ENCODE measurements at regions of chr5 and their contacts with region 1.

Region 1: DNA sequence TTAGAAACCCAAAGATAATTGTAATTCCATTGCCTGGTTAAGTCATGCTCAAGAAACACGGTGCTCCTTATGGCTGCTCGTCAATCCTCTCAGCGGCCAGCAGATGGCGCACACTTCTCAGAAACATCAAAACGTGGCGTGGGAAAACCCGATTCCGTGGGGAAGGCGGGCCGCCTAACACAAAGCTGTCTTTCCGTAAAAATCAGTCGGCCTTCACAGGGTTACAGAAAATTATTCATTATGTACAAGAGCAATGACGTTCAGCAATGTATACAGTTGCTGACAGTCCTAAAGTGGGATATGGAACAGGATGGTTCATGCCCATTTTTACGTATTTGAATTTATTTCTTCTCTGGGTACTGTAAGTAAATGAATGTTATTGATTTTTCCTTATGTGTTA is 83.5 kb downstream of the PDE4D start:
- DNase-seq: peak; percentile 77
- H3K4me3 ChIP-seq: no peak overlapping the region
- H3K27ac ChIP-seq: no peak overlapping the region
- H3K4me1 ChIP-seq: no peaks in the 10 kb centered on the region
- H3K27me3 ChIP-seq: peaks cover 44% of the 10 kb centered on the region
- CTCF ChIP-seq: peak; percentile 93

Region 2: GRCh38 chr5:59724482-59725391 is 85.3 kb before region 1 on chr5:
- CTCF ChIA-PET with region 1: no interaction called
- POLR2A ChIA-PET with region 1: no interaction called
- intact Hi-C with region 1: no loop called
- DNase-seq: peak; percentile 69
- H3K4me3 ChIP-seq: no peak overlapping the region
- H3K27ac ChIP-seq: no peak overlapping the region
- H3K4me1 ChIP-seq: no peaks in the 10 kb centered on the region
- H3K27me3 ChIP-seq: peaks cover 8% of the 10 kb centered on the region
- CTCF ChIP-seq: peak; percentile 78

Region 3: DNA sequence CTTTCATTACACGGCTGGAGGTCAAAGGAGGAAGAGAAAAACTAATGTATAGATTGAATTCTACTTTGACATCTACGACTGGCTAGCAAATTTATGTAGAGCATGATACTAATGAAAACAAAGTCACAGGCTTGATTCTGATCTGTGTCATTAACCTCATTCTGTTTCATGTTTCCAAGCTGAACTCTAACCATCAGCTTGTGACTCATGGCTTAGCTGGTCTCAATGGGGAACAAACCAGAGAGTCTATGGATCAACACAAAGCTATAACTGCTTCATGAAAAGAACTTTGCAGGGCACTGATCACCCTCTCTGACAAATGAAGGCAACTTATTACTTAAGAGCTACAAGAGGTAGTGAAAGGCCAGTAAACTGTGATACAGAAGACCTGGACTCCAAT is 107.1 kb after region 1 on chr5:
- CTCF ChIA-PET with region 1: no interaction called
- POLR2A ChIA-PET with region 1: no interaction called
- intact Hi-C with region 1: no loop called
- DNase-seq: no peak
- H3K4me3 ChIP-seq: no peak overlapping the region
- H3K27ac ChIP-seq: no peak overlapping the region
- H3K4me1 ChIP-seq: no peaks in the 10 kb centered on the region
- H3K27me3 ChIP-seq: peaks cover 15% of the 10 kb centered on the region
- CTCF ChIP-seq: no peak

Region 4: GRCh38 chr5:60161340-60161934 is 351.4 kb after region 1 on chr5:
- CTCF ChIA-PET with region 1: no interaction called
- POLR2A ChIA-PET with region 1: no interaction called
- intact Hi-C with region 1: loop called (anchors 2 kb)
- DNase-seq: peak; percentile 59
- H3K4me3 ChIP-seq: no peak overlapping the region
- H3K27ac ChIP-seq: no peak overlapping the region
- H3K4me1 ChIP-seq: no peaks in the 10 kb centered on the region
- H3K27me3 ChIP-seq: peaks cover 28% of the 10 kb centered on the region
- CTCF ChIP-seq: peak; percentile 69

Region 5: DNA sequence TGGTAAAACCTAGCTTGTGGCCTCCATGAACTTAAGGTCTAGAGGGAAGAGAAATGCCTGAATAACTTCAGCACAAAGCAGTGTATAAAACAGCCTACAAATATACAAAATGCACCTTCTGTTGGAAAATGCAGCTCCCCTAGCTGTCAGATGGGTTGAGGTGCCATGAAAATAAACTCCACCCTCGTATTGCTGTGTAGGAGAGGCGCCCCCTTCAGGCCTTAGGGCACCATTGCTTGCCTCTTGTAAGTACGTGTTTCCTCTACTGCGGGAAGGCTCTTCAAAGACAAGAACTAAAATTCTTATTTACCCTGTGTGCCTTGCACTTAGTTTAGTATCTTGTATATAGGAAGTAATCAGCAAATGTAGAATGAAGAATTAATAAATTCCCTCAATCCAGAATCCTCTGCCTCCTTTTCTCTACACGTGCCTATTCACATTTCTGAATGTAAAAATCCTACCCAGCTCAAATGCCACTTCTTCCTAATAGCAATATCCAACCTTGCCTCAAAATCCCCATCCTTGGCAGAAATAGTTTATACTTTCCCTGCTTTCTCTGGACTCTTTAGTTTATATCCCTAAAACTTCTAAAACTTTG is 477.2 kb after region 1 on chr5:
- CTCF ChIA-PET with region 1: interaction called, 15 read pairs
- POLR2A ChIA-PET with region 1: no interaction called
- intact Hi-C with region 1: loop called (anchors 1 kb)
- DNase-seq: peak; percentile 91
- H3K4me3 ChIP-seq: no peak overlapping the region
- H3K27ac ChIP-seq: no peak overlapping the region
- H3K4me1 ChIP-seq: no peaks in the 10 kb centered on the region
- H3K27me3 ChIP-seq: peaks cover 58% of the 10 kb centered on the region
- CTCF ChIP-seq: peak; percentile 96

Region 6: GRCh38 chr5:60382716-60383115 is 572.7 kb after region 1 on chr5:
- CTCF ChIA-PET with region 1: no interaction called
- POLR2A ChIA-PET with region 1: no interaction called
- intact Hi-C with region 1: loop called (anchors 1 kb)
- DNase-seq: peak; percentile 45
- H3K4me3 ChIP-seq: no peak overlapping the region
- H3K27ac ChIP-seq: no peak overlapping the region
- H3K4me1 ChIP-seq: no peaks in the 10 kb centered on the region
- H3K27me3 ChIP-seq: peaks cover 67% of the 10 kb centered on the region
- CTCF ChIP-seq: peak; percentile 55

Region 7: GRCh38 chr5:60649283-60649917 is 839.4 kb after region 1 on chr5:
- CTCF ChIA-PET with region 1: no interaction called
- POLR2A ChIA-PET with region 1: no interaction called
- intact Hi-C with region 1: loop called (anchors 5 kb)
- DNase-seq: peak; percentile 48
- H3K4me3 ChIP-seq: no peak overlapping the region
- H3K27ac ChIP-seq: no peak overlapping the region
- H3K4me1 ChIP-seq: no peaks in the 10 kb centered on the region
- H3K27me3 ChIP-seq: no peaks in the 10 kb centered on the region
- CTCF ChIP-seq: peak; percentile 73

Region 8: DNA sequence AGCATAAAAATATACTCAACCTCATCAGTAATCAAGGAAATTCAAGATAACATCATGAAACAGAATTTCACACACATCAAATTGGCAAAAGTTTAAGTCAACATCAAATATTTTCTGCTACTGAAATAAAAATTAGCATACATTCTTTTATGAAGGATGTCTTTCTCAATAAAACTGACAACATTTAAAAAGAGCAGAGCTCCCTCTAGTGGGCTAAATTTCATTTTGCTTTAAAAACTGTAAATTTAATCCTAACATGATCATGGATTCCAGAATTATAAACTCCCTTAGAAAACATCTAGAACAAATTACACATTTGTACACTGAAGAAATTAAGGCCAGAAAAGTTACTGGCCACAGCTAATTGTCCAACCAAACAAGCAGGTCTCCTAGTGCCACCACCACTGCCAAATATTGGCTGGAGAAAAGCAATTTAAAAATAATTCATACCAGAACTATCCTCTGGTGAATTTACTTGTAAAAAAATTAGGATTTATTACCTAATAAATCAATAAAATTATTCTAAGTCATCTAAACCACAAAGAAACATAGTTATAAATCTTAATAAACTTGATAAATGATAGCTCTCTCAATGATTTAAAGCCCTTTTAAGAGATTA is 858.8 kb after region 1 on chr5:
- CTCF ChIA-PET with region 1: no interaction called
- POLR2A ChIA-PET with region 1: no interaction called
- intact Hi-C with region 1: loop called (anchors 2 kb)
- DNase-seq: peak; percentile 65
- H3K4me3 ChIP-seq: no peak overlapping the region
- H3K27ac ChIP-seq: no peak overlapping the region
- H3K4me1 ChIP-seq: peaks cover 13% of the 10 kb centered on the region
- H3K27me3 ChIP-seq: no peaks in the 10 kb centered on the region
- CTCF ChIP-seq: peak; percentile 76

Measured in A673 (cell line).